ENCODE measurements at regions of chr4 and their contacts with region 1.

Region 1: DNA sequence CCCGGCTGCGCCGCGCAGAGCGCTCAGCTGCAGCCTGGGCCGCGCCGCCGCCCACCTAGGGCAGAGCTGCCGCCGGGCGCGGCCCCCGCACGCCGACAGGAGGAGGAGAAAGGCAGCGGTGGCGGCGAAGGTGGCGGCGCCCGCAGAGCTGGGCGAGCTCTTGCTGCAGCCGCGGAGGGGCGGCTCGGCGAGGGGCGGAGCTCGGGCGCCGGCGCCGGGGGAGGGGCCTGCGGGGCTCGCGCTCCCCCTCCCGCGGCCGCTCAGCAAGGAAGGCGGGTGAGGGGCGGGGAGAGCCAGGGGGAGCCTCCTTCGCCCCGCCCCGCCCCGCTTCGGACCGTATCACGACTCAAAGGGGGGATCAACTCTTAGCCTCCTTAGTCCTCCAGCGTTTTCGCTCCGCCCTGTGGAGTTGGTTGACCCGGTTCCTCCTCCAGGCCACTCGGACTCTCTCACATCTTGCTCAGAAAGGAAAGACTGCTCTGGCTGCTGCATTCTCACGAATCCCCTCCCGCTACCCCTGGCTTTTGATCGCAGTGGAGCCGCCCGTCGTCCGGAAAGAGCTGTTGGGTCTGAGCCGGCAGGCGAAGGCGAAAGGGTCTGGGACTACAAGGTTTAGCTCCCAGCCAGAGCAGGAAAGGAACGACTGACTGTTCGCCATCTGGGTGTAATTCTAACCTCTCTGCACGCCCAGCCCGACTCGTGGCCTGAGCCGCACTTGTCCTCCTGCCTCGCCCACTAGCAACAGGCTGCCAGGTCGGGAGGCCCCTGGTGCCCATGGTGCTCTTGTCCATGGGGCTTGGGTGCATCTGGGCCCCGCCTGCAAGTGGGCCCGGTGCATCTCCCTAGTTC is at the start of gene ATP8A1:
- DNase-seq: peak; percentile 90 to 98 (median 94)
- ATAC-seq: peak; percentile 83 to 84
- H3K4me3 Mint-ChIP-seq: peak within 1 kb of the TSS; percentile 95 to 99 (median 98)
- H3K27ac Mint-ChIP-seq: peak within 1 kb of the TSS; percentile 96 to 100 (median 99)
- H3K4me1 Mint-ChIP-seq: peaks cover 36 to 54% (median 51%) of the 10 kb centered on the region in 4 donors
- H3K27me3 Mint-ChIP-seq: no peaks in the 10 kb centered on the region
- polyA plus RNA-seq, gene ATP8A1: 17.5 to 31.1 (median 20.5) TPM

Region 2: DNA sequence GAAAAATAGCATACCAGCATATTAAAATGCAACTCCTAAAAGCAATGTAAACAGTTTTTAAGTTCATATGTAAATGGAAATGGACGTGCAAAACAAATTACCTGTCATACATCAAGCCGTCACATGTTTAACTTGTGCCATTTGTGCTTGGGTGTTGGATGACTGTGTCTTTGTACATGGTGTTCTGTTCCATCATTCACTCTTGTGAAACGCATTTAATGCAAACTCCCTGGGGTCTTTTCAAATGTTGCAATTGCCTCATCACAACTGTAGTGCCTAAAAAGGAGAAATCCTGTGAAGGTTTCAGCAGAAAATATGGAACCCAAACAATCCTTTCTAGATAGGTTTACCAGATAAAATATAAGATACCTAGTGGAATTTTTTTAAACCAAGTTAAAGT is 961.0 kb before region 1 on chr4:
- POLR2A ChIA-PET with region 1: no interaction called
- DNase-seq: no peak
- ATAC-seq: no peak
- H3K4me3 Mint-ChIP-seq: no peak overlapping the region
- H3K27ac Mint-ChIP-seq: no peak overlapping the region
- H3K4me1 Mint-ChIP-seq: peaks cover 0 to 5% (median 1%) of the 10 kb centered on the region in 4 donors
- H3K27me3 Mint-ChIP-seq: peaks cover 0 to 4% (median 1%) of the 10 kb centered on the region in 5 donors

Region 3: DNA sequence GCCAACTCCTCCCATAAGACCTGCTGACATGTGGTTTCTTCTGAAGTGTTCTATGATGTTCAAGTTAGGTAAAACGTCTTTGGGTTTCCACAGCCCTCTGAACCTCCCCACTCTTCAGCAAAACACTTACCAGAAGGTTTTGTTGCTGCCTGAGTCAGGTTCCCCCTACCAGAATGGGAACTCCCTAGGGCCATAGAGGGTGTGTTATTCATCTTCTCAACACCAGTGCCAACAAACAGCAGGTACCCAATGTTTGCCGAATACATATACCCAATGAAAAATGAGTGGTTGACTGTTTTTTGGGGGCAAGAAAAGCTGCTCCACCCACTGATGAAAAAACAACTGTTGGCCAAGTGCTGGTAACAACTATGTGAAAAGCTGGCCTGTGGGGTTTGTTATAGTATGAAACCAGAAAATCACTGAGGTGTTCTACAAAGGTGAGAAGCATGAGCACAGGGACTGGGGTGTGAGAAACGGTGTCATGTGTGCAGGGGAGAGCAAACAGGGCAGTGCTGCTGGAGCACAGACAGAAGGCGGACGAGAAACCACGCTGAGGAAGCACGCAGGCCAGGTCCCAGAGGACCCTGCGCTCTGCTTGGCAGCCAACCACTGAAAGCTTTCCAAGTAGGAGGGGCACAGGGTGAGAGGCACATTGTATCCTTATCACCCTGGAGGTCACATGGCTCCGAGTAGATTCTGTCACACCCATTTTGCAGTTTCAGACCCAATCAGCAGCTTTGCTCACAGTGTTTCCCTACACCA is 29.1 kb before region 1 on chr4:
- POLR2A ChIA-PET with region 1: interaction called, 120 read pairs
- DNase-seq: peak; percentile 19 to 92 (median 78)
- ATAC-seq: peak; percentile 90 to 93
- H3K4me3 Mint-ChIP-seq: peak overlapping the region; percentile 68 to 88 (median 82)
- H3K27ac Mint-ChIP-seq: peak overlapping the region; percentile 94 to 100 (median 98)
- H3K4me1 Mint-ChIP-seq: peaks cover 40 to 92% (median 78%) of the 10 kb centered on the region in 4 donors
- H3K27me3 Mint-ChIP-seq: no peaks in the 10 kb centered on the region

Region 4: GRCh38 chr4:42633605-42634388 is 23.4 kb before region 1 on chr4:
- POLR2A ChIA-PET with region 1: interaction called, 120 read pairs
- DNase-seq: no peak
- ATAC-seq: no peak
- H3K4me3 Mint-ChIP-seq: peak overlapping the region in 2 of 10 donors; percentile 3 to 6
- H3K27ac Mint-ChIP-seq: peak overlapping the region in 9 of 10 donors; percentile 5 to 80 (median 46)
- H3K4me1 Mint-ChIP-seq: peaks cover 41 to 95% (median 91%) of the 10 kb centered on the region in 4 donors
- H3K27me3 Mint-ChIP-seq: no peaks in the 10 kb centered on the region

Region 5: GRCh38 chr4:42643685-42644084 is 13.5 kb before region 1 on chr4:
- POLR2A ChIA-PET with region 1: interaction called, 31 read pairs
- DNase-seq: no peak
- ATAC-seq: no peak
- H3K4me3 Mint-ChIP-seq: peak overlapping the region in 8 of 10 donors; percentile 13 to 72 (median 40)
- H3K27ac Mint-ChIP-seq: peak overlapping the region in 5 of 10 donors; percentile 10 to 81 (median 58)
- H3K4me1 Mint-ChIP-seq: peaks cover 48 to 96% (median 88%) of the 10 kb centered on the region in 4 donors
- H3K27me3 Mint-ChIP-seq: no peaks in the 10 kb centered on the region

Region 6: DNA sequence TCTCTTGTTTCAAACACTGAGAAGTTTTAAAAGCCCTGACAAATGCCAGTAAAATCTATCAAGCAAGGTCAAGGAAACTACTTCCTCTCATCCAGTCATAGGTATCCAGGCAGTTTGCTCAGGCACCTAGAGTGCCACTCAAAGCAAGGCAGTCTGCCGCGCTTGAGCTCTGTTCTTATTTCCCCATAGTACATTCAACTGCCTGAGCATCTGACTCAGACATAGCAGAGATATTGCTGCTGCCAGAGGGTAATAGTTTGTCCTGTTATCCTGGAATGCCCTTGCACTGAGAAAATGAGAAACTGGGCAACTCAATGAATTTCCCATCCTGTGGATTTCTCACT is 15.9 kb after region 1 on chr4:
- POLR2A ChIA-PET with region 1: interaction called, 107 read pairs
- DNase-seq: peak in 4 of 10 donors; percentile 3 to 31 (median 21)
- ATAC-seq: peak; percentile 28 to 49
- H3K4me3 Mint-ChIP-seq: peak overlapping the region; percentile 56 to 83 (median 76)
- H3K27ac Mint-ChIP-seq: peak overlapping the region; percentile 94 to 98 (median 96)
- H3K4me1 Mint-ChIP-seq: peaks cover 28 to 67% (median 58%) of the 10 kb centered on the region in 4 donors
- H3K27me3 Mint-ChIP-seq: no peaks in the 10 kb centered on the region

Region 7: GRCh38 chr4:42678512-42678911 is 21.3 kb after region 1 on chr4:
- POLR2A ChIA-PET with region 1: interaction called, 107 read pairs
- DNase-seq: peak in 2 of 10 donors; percentile 36 to 37
- ATAC-seq: peak in 1 of 2 donors; percentile 66
- H3K4me3 Mint-ChIP-seq: peak overlapping the region in 4 of 10 donors; percentile 4 to 41 (median 16)
- H3K27ac Mint-ChIP-seq: peak overlapping the region in 7 of 10 donors; percentile 11 to 87 (median 52)
- H3K4me1 Mint-ChIP-seq: peaks cover 22 to 65% (median 44%) of the 10 kb centered on the region in 4 donors
- H3K27me3 Mint-ChIP-seq: no peaks in the 10 kb centered on the region

Region 8: GRCh38 chr4:42750091-42750490 is 92.9 kb after region 1 on chr4:
- POLR2A ChIA-PET with region 1: interaction called, 13 read pairs
- DNase-seq: peak; percentile 6 to 79 (median 52)
- ATAC-seq: peak; percentile 97 to 98
- H3K4me3 Mint-ChIP-seq: no peak overlapping the region
- H3K27ac Mint-ChIP-seq: peak overlapping the region in 4 of 10 donors; percentile 0 to 46 (median 37)
- H3K4me1 Mint-ChIP-seq: peaks cover 0 to 5% (median 2%) of the 10 kb centered on the region in 4 donors
- H3K27me3 Mint-ChIP-seq: no peaks in the 10 kb centered on the region

Region 9: DNA sequence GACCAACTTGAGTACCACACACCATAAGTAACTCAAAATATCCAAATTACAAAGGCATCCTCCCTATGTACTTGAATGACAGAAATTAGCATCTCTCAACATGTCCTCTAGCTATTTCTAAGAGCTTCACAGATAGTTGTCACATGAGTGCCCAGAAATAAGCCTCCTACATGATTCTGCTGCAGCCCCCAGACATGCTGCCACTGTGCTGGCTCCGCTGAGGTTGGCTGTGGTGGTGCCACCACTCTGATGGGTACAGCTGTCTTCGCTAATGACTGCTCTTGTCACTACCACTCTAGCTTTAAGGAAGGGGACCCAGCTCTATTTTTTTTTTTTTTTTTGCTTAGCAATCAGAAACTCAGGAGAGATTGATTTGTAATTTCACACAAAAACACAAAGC is 491.3 kb after region 1 on chr4:
- POLR2A ChIA-PET with region 1: no interaction called
- DNase-seq: no peak
- ATAC-seq: no peak
- H3K4me3 Mint-ChIP-seq: no peak overlapping the region
- H3K27ac Mint-ChIP-seq: no peak overlapping the region
- H3K4me1 Mint-ChIP-seq: no peaks in the 10 kb centered on the region
- H3K27me3 Mint-ChIP-seq: no peaks in the 10 kb centered on the region

Measured in naive thymus-derived CD8-positive, alpha-beta T cell (primary cell).